ENCODE measurements at regions of chr3 and their contacts with region 1.

Region 1: DNA sequence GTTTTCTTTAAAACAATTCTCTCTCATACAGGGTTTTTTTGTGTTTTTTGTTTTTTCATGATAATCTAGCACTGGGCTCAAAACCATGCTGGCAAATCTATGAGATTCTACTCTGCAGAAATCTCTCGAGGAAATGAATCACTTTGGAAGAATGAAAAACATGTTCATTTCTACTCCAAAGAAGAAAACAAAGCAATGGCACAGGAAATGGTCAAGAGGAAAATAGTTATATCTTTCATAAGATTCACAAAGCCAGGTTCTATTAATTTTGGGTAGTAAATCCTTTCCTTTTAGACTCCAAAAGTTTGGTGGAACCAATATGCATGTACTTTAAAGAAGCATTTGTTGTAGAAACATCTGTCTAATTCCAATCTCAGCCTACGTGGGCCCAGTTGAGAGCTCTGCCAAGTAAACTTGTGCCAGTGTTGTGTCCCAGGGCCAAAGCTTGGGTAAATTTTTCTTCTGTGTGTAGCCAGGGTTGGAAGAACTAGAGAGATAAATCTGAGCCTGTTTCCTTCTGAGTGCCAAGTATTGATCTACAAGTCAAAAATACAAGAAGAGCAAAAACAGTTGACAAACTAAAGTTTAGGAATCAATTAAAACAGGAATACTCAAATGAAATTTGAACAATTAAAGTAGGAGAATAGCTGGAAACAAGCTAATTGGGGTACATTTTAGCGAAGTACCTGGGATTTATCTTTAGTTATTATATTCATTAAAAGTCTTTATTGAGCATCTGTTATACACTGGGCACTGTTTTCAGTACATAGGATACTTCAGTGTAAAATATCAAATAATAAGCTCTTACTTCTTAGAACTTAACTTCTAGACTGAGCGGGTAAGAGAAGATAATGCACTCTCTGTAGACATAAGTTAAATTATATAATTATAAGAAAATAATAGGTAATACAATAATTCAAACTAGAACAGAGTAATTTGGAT is 657.5 kb upstream of the NECTIN3 start:
- DNase-seq: peak in 1 of 2 donors; percentile 63
- H3K4me3 ChIP-seq: no peak overlapping the region
- H3K27ac ChIP-seq: peak overlapping the region; percentile 71 to 83
- H3K4me1 ChIP-seq: peaks cover 0 to 18% of the 10 kb centered on the region in 2 donors
- H3K27me3 ChIP-seq: no peaks in the 10 kb centered on the region
- CTCF ChIP-seq: no peak

Region 2: GRCh38 chr3:110267304-110267845 is 146.7 kb before region 1 on chr3:
- intact Hi-C with region 1: no loop called
- DNase-seq: no peak
- H3K4me3 ChIP-seq: no peak overlapping the region
- H3K27ac ChIP-seq: no peak overlapping the region
- H3K4me1 ChIP-seq: no peaks in the 10 kb centered on the region
- H3K27me3 ChIP-seq: no peaks in the 10 kb centered on the region
- CTCF ChIP-seq: no peak

Region 3: GRCh38 chr3:110307065-110307809 is 106.8 kb before region 1 on chr3:
- intact Hi-C with region 1: no loop called
- DNase-seq: no peak
- H3K4me3 ChIP-seq: no peak overlapping the region
- H3K27ac ChIP-seq: no peak overlapping the region
- H3K4me1 ChIP-seq: no peaks in the 10 kb centered on the region
- H3K27me3 ChIP-seq: no peaks in the 10 kb centered on the region
- CTCF ChIP-seq: no peak

Region 4: DNA sequence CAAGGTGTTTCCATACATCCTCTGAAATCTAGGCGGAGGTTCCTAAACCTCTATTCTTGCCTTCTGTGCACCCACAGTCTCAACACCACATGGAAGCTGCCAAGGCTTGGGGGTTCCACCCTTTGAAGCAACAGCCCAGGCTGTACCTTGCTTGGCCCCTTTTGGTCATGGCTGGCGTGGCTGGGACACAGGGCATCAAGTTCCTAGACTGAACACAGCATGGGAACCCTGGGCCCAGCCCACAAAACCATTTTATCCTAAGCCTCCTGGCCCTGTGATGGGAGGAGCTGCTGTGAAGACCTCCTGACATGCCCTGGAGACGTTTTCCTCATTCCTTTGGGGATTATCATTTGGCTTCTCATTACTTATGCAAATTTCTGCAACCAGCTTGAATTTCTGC is 81.4 kb before region 1 on chr3:
- intact Hi-C with region 1: no loop called
- DNase-seq: no peak
- H3K4me3 ChIP-seq: no peak overlapping the region
- H3K27ac ChIP-seq: no peak overlapping the region
- H3K4me1 ChIP-seq: no peaks in the 10 kb centered on the region
- H3K27me3 ChIP-seq: no peaks in the 10 kb centered on the region
- CTCF ChIP-seq: no peak

Region 5: GRCh38 chr3:110384601-110385000 is 29.5 kb before region 1 on chr3:
- intact Hi-C with region 1: loop called (anchors 2 kb)
- DNase-seq: no peak
- H3K4me3 ChIP-seq: no peak overlapping the region
- H3K27ac ChIP-seq: no peak overlapping the region
- H3K4me1 ChIP-seq: no peaks in the 10 kb centered on the region
- H3K27me3 ChIP-seq: no peaks in the 10 kb centered on the region
- CTCF ChIP-seq: no peak

Measured in ascending aorta (tissue), 2 donors.